ENCODE measurements at regions of chr2 and their contacts with region 1.

Region 1: GRCh38 chr2:37887286-37887685 is 37.8 kb upstream of the RMDN2 start:
- DNase-seq: no peak
- H3K4me3 ChIP-seq: no peak overlapping the region
- H3K27ac ChIP-seq: no peak overlapping the region
- H3K4me1 ChIP-seq: no peaks in the 10 kb centered on the region
- H3K27me3 ChIP-seq: peaks cover 24% of the 10 kb centered on the region
- CTCF ChIP-seq: no peak

Region 2: GRCh38 chr2:37436323-37436722 is 451.0 kb before region 1 on chr2:
- CTCF ChIA-PET with region 1: interaction called, 10 read pairs
- POLR2A ChIA-PET with region 1: no interaction called
- intact Hi-C with region 1: no loop called
- DNase-seq: no peak
- H3K4me3 ChIP-seq: no peak overlapping the region
- H3K27ac ChIP-seq: no peak overlapping the region
- H3K4me1 ChIP-seq: no peaks in the 10 kb centered on the region
- H3K27me3 ChIP-seq: peaks cover 3% of the 10 kb centered on the region
- CTCF ChIP-seq: no peak

Region 3: GRCh38 chr2:37653805-37654378 is 233.4 kb before region 1 on chr2:
- CTCF ChIA-PET with region 1: no interaction called
- POLR2A ChIA-PET with region 1: no interaction called
- intact Hi-C with region 1: no loop called
- DNase-seq: no peak
- H3K4me3 ChIP-seq: no peak overlapping the region
- H3K27ac ChIP-seq: no peak overlapping the region
- H3K4me1 ChIP-seq: peaks cover 14% of the 10 kb centered on the region
- H3K27me3 ChIP-seq: no peaks in the 10 kb centered on the region
- CTCF ChIP-seq: no peak

Region 4: DNA sequence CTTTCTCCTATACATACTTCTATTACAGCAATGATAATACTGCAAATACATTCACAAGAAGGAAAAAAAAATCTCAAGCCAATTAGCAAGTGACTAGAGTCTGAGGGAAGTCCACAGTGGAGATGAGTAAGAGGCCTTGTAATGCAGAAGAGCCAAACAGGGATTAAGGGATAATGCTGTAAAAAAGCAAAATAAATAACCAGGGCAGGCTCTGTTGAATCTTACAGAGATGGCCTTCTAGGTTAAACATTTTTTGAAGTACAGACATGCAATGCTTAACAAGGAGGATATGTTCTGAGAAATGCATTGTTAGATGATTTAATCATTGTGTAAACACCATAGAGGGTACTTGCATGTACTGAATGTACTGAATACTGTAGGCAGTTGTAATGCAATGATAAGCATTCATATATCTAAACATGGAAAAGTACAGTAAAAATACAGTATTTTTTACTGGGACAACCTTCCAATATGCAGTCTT is 84.3 kb before region 1 on chr2:
- CTCF ChIA-PET with region 1: no interaction called
- POLR2A ChIA-PET with region 1: no interaction called
- intact Hi-C with region 1: no loop called
- DNase-seq: no peak
- H3K4me3 ChIP-seq: no peak overlapping the region
- H3K27ac ChIP-seq: no peak overlapping the region
- H3K4me1 ChIP-seq: peaks cover 9% of the 10 kb centered on the region
- H3K27me3 ChIP-seq: peaks cover 4% of the 10 kb centered on the region
- CTCF ChIP-seq: no peak